Stomach (tissue), 19 donors: ENCODE measurements at regions of chr10 and their contacts with region 1.

Region 1: DNA sequence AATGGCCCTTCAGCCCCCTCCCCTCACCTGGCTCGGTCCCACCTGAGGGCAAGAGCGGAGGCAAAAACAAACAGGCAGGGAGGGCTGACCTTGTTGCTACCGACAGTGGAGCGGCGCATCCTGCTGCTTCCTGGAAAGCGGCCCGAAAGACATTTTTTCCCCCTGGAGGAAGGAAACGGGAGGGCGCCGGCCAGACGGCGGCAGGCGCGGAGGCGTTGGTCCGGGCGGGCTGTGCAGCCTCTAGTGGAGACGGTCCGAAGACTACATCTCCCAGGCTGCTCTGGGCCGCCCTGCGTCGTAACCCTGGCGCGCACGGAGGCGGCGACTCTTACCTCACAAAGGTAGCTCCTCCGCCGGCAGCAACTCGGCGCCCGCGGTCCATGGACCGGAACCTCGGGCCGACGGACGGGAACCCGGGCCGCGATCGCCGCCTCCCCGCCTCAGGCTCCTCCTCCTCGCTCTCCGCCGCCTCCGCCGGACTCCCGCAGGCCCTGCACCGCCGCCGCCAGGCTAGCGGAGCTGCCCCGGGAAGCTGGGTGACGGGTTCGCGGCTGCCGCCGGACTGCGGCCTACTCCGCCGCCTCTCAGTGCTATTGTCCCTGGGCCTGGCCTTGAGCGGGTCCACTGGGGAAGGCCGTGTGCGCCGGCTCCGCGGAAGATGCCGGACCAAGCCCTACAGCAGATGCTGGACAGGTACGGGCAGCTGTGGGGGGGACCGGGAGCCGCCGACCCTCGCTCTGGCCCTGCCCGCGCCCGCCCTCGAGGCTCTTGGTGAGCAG is at the starts of genes CPEB3 and MARCHF5:
- DNase-seq: peak; percentile 98 to 99
- H3K4me3 ChIP-seq: peak within 1 kb of the TSS; percentile 64 to 92 (median 85)
- H3K27ac ChIP-seq: peak within 1 kb of the TSS; percentile 93 to 98 (median 96)
- H3K4me1 ChIP-seq: peaks cover 0 to 41% (median 29%) of the 10 kb centered on the region in 4 donors
- H3K27me3 ChIP-seq: no peaks in the 10 kb centered on the region
- CTCF ChIP-seq: peak in 5 of 7 experiments; percentile 58 to 86 (median 83)
- EP300 ChIP-seq: no peak
- POLR2A ChIP-seq: no peak
- total RNA-seq, gene CPEB3: 2.0 to 11.2 (median 6.6) TPM
- total RNA-seq, gene MARCHF5: 1.2 to 37.1 (median 4.9) TPM

Region 2: GRCh38 chr10:92087750-92088395 is 203.2 kb before region 1 on chr10:
- intact Hi-C with region 1: loop called (anchors 10 kb)
- DNase-seq: peak; percentile 76 to 91
- H3K4me3 ChIP-seq: no peak overlapping the region
- H3K27ac ChIP-seq: peak overlapping the region in 1 of 5 donors; percentile 35
- H3K4me1 ChIP-seq: peaks cover 0 to 23% (median 14%) of the 10 kb centered on the region in 4 donors
- H3K27me3 ChIP-seq: no peaks in the 10 kb centered on the region
- CTCF ChIP-seq: peak in 5 of 7 experiments; percentile 64 to 99 (median 77)
- EP300 ChIP-seq: no peak
- POLR2A ChIP-seq: no peak

Region 3: DNA sequence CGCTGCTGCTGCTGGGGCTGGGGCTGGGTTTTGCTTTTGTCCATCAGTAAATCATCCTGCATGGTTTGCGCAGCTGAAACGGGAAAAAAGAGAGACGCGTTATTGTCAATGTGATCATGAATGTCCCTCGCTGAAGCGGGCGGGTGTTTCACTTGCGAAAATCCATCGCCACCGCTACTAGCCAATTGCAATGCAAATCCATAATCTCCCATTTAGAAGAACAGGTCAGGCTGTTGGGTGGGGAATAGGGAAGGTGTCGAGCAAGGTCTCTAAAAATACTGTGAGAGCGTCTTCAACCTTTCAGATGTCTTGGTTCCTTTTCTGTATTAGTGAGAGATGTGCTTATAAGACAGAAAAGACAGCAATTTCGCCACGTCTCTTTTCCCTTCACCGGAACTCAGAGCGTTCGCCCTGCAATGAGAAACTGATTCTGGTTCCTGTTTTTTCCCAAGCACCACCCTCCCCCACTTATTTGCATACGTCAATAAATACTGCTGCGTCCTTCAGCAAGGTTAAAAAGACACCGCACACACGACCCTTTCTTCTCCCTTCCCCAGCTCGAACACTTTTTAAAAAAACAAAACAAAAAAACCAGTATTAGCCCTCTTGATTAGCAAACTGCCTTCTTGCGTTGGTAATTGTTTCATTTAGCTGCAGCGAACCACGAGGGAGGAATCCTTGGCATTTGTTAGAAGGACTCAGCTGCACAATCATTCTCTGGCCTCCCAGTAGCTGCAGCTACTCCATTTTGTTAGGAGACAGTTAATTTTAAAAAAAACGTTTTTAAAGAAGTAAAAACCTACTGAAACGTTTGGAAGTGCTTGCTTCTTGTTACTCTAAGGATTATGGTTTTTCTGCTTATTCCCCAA is 50.5 kb before region 1 on chr10:
- intact Hi-C with region 1: loop called (anchors 10 kb)
- DNase-seq: peak; percentile 70 to 92
- H3K4me3 ChIP-seq: peak overlapping the region; percentile 69 to 89 (median 78)
- H3K27ac ChIP-seq: peak overlapping the region; percentile 85 to 91 (median 89)
- H3K4me1 ChIP-seq: peaks cover 12 to 69% (median 46%) of the 10 kb centered on the region in 4 donors
- H3K27me3 ChIP-seq: no peaks in the 10 kb centered on the region
- CTCF ChIP-seq: no peak
- EP300 ChIP-seq: no peak
- POLR2A ChIP-seq: peak in 2 of 4 donors; percentile 51 to 60

Region 4: DNA sequence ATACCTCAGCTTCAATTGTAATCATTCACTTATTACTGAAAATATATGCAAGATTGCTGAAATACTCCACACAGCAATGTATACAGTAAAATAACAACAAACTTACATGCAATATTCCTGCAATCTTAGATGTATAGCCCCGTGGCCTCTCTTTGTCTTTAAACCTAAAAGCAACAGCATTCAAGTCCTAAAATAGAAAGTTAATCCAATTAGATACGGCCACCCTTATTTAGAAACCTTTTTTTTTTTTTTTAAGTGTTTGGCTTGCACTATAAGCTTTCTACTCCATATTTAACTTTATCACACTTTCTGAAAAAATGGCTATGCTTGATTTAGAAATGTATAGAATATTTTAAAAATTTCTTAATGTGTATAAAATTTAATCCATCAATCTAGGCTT is 215.3 kb after region 1 on chr10:
- intact Hi-C with region 1: no loop called
- DNase-seq: no peak
- H3K4me3 ChIP-seq: no peak overlapping the region
- H3K27ac ChIP-seq: no peak overlapping the region
- H3K4me1 ChIP-seq: no peaks in the 10 kb centered on the region
- H3K27me3 ChIP-seq: no peaks in the 10 kb centered on the region
- CTCF ChIP-seq: no peak
- EP300 ChIP-seq: no peak
- POLR2A ChIP-seq: no peak